Cardiac septum (tissue), 1 donor: ENCODE measurements at regions of chr14 and their contacts with region 1.

Region 1: DNA sequence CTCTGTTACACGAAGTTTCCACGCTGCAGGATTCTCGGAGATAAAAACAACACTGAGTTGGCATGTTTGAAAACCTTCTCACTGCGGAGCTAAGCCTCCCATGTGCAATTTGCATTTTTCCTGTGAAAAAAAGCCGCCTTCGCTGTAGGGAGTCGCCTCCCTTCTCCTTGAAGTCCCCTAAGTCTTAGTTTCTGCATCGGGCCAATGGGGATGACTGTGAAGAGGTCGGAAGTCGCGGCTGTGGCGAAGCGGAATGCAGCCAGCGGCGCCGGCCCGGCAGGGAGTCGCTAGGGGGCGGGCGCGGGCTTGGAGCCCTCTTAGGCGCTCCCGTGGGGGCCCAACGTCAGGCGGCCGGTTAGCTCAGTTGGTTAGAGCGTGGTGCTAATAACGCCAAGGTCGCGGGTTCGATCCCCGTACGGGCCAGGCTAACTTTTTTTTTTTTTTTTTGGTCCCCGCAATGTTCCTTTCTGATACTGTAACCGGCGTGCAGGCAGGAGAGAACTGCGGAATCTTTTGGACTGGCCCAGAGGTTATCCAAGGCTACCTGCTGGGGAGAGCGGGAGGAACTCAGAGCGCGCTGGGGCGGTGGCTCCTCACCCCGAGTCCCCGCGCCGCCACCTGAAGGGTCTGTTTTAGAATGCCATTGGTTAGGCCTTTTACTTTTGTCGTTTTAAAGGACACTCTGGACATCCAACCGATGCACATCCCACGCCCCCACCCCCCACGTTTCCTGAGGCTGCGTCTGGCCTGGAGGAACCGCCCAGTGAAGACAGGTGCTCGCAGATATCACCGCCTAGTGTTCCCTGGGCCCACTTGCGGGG is 2.6 kb upstream of the ZNF839 start:
- DNase-seq: peak; percentile 97

Region 2: GRCh38 chr14:101964297-101965144 is 352.4 kb before region 1 on chr14 and contains the start of gene DYNC1H1:
- intact Hi-C with region 1: loop called (anchors 5 kb)
- DNase-seq: peak; percentile 96
- total RNA-seq, gene DYNC1H1: 575 TPM

Region 3: DNA sequence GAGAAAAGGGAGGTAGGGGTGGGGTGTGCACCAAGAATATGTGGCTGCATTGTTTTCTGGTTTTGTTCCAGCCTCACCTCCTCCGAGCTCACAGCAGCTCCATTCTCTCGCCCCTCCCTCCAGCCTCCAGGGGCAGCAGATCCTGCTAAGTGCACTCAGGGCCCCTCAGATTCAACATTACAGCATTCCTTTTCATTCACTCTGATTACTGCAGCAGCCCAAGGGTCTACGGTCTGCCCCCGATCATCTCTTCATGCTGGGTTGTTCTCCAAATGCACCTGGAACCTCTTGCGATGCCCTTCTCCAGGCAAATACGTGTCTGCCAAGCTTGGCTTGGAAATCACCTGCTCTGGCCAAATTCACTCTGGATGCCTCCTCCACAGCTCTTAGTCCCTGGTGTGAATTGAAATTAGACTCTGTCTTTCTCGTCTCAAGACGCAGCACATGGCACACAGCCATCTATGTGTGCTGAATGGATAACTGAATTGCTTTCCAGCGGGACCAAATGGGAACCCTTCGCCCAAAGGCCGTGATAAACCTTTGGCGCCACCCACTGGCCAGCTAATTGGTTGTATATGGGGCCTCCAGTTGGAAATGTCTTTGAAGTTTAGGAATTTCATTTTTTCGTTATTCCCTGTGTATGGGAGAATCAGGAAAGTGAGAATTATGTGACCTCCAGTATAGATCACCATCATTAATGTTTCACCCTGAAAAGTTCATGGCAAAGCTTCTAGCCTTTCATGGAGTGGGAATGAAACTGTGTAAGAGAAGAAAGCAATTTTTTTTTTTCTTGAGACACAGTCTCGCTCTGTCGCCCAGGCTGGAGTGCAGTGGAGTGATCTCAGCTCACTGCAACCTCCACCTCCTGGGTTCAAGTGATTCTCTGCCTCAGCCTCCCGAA is 220.5 kb before region 1 on chr14:
- intact Hi-C with region 1: loop called (anchors 5 kb)
- DNase-seq: peak; percentile 86

Region 4: DNA sequence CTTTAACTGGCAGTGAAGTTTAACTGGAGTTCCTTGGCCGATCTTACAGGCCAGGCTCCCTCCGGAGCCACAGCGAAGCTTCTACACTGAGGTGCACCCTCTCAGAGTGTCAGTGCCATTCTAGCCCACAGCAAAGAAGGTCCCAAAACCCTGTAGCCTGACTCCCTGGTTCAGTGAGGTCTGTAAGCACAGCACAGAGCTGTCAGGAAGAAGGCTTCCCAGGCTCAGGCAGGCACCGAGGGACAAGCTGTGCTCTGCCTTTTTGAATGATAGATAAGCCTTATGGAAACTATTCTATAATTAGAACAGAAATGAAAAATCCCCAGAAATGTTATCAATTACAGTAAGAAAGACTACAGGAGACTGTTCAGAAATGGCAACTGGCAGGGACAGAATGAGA is 52.2 kb before region 1 on chr14:
- intact Hi-C with region 1: loop called (anchors 5 kb)
- DNase-seq: no peak

Region 5: GRCh38 chr14:102509744-102510615 is 193.0 kb after region 1 on chr14 and contains the start of gene ANKRD9:
- intact Hi-C with region 1: loop called (anchors 5 kb)
- DNase-seq: peak; percentile 97
- total RNA-seq, gene ANKRD9: 137 TPM